GM12878 (cell line): ENCODE measurements at regions of chr2 and their contacts with region 1.

Region 1: DNA sequence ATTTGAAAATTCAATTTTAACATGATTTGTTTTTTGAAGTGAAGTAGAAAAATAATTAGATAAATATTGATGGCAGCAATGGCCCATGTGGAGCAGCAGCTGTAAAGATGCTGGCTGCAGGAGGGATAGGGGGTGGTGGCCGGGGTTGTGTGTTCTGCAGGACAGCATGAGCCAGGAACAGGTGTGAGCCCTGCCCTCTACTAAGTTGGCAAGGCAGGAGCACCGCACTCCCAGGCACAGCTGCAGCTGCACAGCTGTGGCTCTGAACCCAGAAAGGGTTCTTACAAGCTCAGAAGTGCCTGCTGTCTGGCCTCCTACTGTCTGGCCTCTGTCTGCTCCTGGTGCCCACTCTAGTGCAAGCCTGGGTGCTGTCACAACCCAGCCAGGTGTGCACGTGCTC is 10.0 kb upstream of the DUSP19 start:
- DNase-seq: no peak
- ATAC-seq: no peak
- H3K4me3 ChIP-seq: no peak overlapping the region
- H3K27ac ChIP-seq: no peak overlapping the region
- H3K4me1 ChIP-seq: no peaks in the 10 kb centered on the region
- H3K27me3 ChIP-seq: no peaks in the 10 kb centered on the region; a peak in 1 of 4 replicates
- CTCF ChIP-seq: no peak
- EP300 ChIP-seq: no peak
- POLR2A ChIP-seq: no peak
- RAD21 ChIP-seq: no peak

Region 2: GRCh38 chr2:183078465-183079138 is 10.0 kb after region 1 on chr2 and contains the start of gene DUSP19:
- CTCF ChIA-PET with region 1: interaction called, 4 read pairs
- POLR2A ChIA-PET with region 1: no interaction called
- RAD21 ChIA-PET with region 1: no interaction called
- SMC1A ChIA-PET with region 1: interaction called, 11 read pairs
- in situ Hi-C with region 1: no loop called
- intact Hi-C with region 1: no loop called
- DNase-seq: peak; percentile 95
- ATAC-seq: peak; percentile 92
- H3K4me3 ChIP-seq: peak within 1 kb of the TSS; percentile 82
- H3K27ac ChIP-seq: no peak within 1 kb of the TSS
- H3K4me1 ChIP-seq: no peaks in the 10 kb centered on the region
- H3K27me3 ChIP-seq: no peaks in the 10 kb centered on the region; a peak in 1 of 4 replicates
- CTCF ChIP-seq: no peak
- EP300 ChIP-seq: no peak
- POLR2A ChIP-seq: peak; percentile 68
- RAD21 ChIP-seq: no peak
- polyA plus RNA-seq, gene DUSP19: 0.18 to 0.58 TPM